ENCODE measurements at regions of chr2 and their contacts with region 1.

Region 1: DNA sequence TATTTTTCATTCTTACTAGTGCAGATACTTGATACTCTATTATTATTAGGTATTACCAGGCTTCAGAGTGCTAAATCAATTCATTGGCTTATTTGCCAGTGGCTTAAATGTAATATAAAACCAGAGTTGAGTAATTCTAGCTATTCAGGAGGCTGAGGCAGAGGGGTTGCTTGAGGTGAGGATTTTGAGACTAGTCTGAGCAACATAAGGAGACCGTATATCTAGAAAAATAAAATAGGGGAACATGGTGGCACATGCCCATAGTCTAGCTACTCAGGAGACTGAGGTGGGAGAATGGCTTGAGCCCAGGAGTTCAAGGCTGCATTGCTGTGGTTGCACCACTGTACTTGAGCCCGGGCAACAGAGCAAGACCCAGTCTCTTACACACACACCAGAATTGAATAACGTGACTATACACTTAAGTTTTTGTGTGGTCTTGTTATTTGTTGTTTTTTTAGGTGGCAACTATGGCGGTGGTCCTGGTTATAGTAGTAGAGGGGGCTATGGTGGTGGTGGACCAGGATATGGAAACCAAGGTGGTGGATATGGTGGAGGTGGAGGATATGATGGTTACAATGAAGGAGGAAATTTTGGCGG is 4.8 kb downstream of the HNRNPA3 start:
- DNase-seq: no peak
- ATAC-seq: no peak
- H3K4me3 ChIP-seq: no peak overlapping the region
- H3K27ac ChIP-seq: peak overlapping the region; percentile 7
- H3K4me1 ChIP-seq: peaks cover 70% of the 10 kb centered on the region
- H3K27me3 ChIP-seq: no peaks in the 10 kb centered on the region
- CTCF ChIP-seq: no peak

Region 2: GRCh38 chr2:177229448-177230242 is 12.3 kb after region 1 on chr2:
- intact Hi-C with region 1: loop called in 1 of 2 experiments (anchors 2 kb)
- DNase-seq: no peak
- ATAC-seq: peak; percentile 23 to 35 (median 34)
- H3K4me3 ChIP-seq: no peak overlapping the region
- H3K27ac ChIP-seq: peak overlapping the region; percentile 47
- H3K4me1 ChIP-seq: peaks cover 30% of the 10 kb centered on the region
- H3K27me3 ChIP-seq: no peaks in the 10 kb centered on the region
- CTCF ChIP-seq: no peak

Measured in psoas muscle (tissue), 8 donors.